Endothelial cell of umbilical vein (primary cell): ENCODE measurements at regions of chr2 and their contacts with region 1.

Region 1: GRCh38 chr2:191869178-191869577 is 22.3 kb upstream of the CAVIN2 start:
- DNase-seq: peak; percentile 65
- H3K4me3 ChIP-seq: no peak overlapping the region
- H3K27ac ChIP-seq: no peak overlapping the region
- H3K4me1 ChIP-seq: peaks cover 39% of the 10 kb centered on the region
- H3K27me3 ChIP-seq: no peaks in the 10 kb centered on the region
- CTCF ChIP-seq: peak; percentile 25 to 37
- POLR2A ChIP-seq: no peak

Region 2: DNA sequence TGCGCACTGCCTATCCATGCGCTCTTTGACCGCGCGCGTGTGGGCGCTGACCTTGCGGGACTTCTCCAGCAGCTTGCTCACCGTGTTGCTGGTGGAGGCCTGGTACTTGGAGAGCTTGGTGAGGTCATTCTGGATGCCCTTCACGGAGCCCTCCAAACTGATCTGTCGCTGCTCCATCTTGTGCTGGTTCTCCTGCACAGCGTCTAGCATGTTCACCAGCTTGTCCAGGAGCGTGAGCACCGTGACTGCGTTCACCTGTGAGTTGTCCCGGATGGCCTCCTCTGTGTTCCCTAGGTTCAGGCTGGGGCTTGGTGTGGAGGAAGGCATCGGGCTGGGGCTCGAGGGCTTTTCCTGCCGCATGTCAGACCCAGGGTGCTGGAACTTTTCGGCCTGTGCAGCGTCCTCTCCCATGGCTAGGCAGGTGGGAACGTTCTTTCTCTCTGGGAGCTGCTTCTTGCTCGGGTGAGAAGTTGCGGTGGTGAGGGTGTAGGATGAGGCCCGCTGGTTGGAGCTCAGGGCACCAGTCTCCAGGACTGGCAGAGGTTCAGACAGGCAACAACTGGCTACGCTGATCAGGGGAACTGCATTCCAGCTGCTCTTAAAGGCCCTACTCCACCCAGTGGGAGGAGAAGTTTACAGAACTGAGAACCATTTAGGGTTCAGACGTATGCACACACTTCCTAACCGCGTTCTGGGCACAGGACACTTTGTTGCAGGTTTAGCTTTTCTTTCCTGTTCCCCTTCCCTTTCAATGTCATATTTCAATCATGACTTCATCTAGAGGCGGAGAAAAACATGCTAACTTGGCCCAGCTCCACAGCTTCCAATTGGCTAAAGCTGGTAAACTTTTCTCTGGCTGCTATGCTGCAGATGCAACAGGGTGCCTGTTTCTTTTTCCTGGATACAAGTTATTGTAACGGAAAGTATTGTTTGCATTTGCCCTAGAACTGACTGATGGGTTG is 22.4 kb before region 1 on chr2 and contains the start of gene CAVIN2:
- CTCF ChIA-PET with region 1: interaction called, 19 read pairs
- POLR2A ChIA-PET with region 1: interaction called, 8 read pairs
- dilution Hi-C with region 1: no loop called
- intact Hi-C with region 1: loop called (anchors 1 kb)
- DNase-seq: peak; percentile 100
- H3K4me3 ChIP-seq: peak within 1 kb of the TSS; percentile 82 to 99 (median 95)
- H3K27ac ChIP-seq: peak within 1 kb of the TSS; percentile 76
- H3K4me1 ChIP-seq: peaks cover 21% of the 10 kb centered on the region
- H3K27me3 ChIP-seq: no peaks in the 10 kb centered on the region
- CTCF ChIP-seq: peak in 1 of 2 donors; percentile 17
- POLR2A ChIP-seq: peak; percentile 98
- total RNA-seq, gene CAVIN2: 171 and 202 TPM in 2 replicates

Region 3: DNA sequence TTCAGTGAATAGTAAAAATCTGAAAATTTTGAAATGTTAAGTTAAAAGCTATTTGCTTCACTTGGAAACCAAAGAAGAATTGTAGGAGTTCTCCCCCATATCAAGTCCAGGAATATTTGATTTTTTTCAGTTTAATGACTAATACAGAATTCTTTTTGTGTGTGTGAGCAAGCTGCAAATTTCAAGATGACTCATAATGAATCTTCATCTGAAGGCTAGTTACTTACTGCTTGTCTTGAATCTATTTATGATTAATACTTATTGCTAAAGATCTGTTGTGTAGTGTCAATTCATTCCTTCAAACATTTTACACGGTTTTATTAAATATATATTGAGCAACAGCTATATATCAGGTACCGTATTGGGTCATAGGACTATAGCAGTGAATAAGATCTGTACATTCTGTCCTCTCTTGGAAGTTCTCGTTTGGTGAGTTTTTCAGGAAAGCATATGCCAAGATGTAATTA is 25.5 kb after region 1 on chr2:
- CTCF ChIA-PET with region 1: interaction called, 8 read pairs
- POLR2A ChIA-PET with region 1: no interaction called
- dilution Hi-C with region 1: no loop called
- intact Hi-C with region 1: loop called (anchors 1 kb)
- DNase-seq: peak; percentile 61
- H3K4me3 ChIP-seq: no peak overlapping the region
- H3K27ac ChIP-seq: peak overlapping the region; percentile 28
- H3K4me1 ChIP-seq: peaks cover 27% of the 10 kb centered on the region
- H3K27me3 ChIP-seq: no peaks in the 10 kb centered on the region
- CTCF ChIP-seq: no peak
- POLR2A ChIP-seq: no peak

Region 4: GRCh38 chr2:191976436-191976835 is 107.3 kb after region 1 on chr2:
- CTCF ChIA-PET with region 1: interaction called, 7 read pairs
- POLR2A ChIA-PET with region 1: no interaction called
- dilution Hi-C with region 1: no loop called
- intact Hi-C with region 1: loop called (anchors 1 kb)
- DNase-seq: peak; percentile 99
- H3K4me3 ChIP-seq: no peak overlapping the region
- H3K27ac ChIP-seq: peak overlapping the region; percentile 86
- H3K4me1 ChIP-seq: peaks cover 44% of the 10 kb centered on the region
- H3K27me3 ChIP-seq: no peaks in the 10 kb centered on the region
- CTCF ChIP-seq: no peak
- POLR2A ChIP-seq: peak; percentile 64